Activated naive CD4-positive, alpha-beta T cell treated with anti-CD3 and anti-CD28 coated beads for 36 hours (primary cell): ENCODE measurements at regions of chr11 and their contacts with region 1.

Region 1: GRCh38 chr11:65859200-65859811 is 927 bp upstream of the MUS81 start:
- DNase-seq: peak; percentile 99
- H3K4me3 Mint-ChIP-seq: peak overlapping the region; percentile 97
- H3K27ac Mint-ChIP-seq: peak overlapping the region; percentile 100
- H3K4me1 Mint-ChIP-seq: peaks cover 41% of the 10 kb centered on the region
- H3K27me3 Mint-ChIP-seq: no peaks in the 10 kb centered on the region

Region 2: DNA sequence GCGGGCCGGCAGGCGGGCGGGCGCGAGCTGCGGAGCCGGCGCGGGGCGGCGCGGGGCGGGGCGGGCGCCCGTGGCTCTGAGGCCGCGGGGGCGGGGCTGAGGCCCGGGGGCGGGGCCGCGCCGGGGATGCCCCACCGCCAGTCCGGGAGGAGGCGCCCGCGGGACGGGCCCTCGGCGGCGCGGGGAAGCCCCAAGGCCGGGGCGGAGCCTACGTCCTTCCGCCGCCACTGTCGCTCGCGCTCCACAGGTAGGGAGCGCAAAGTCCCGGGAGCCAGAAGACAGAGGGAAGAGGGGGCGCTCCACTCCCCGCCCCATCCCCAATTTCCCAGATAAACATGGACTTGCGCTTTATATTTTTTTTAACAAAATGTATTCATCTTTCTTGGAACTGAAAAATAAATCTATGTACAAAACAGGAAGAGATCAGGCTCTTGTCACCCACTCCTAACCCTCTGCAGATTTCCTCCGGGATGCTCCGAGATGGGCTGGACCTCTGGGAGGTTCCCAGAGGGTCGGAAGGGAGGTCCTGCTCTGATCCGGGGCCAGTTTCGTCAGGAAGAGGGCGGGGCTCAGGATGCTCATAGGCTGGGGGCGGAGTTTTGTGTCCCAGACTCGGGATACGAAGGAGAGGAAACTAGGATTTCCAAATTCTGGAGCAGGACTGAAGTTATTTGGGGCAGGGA is 1056.0 kb before region 1 on chr11 and contains the start of gene MAP4K2:
- CTCF ChIA-PET with region 1: no interaction called
- intact Hi-C with region 1: loop called (anchors 5 kb)
- DNase-seq: peak; percentile 88
- H3K4me3 Mint-ChIP-seq: peak within 1 kb of the TSS; percentile 81
- H3K27ac Mint-ChIP-seq: peak within 1 kb of the TSS; percentile 89
- H3K4me1 Mint-ChIP-seq: peaks cover 31% of the 10 kb centered on the region
- H3K27me3 Mint-ChIP-seq: no peaks in the 10 kb centered on the region
- total RNA-seq, gene MAP4K2: 69.5 to 73.9 TPM

Region 3: GRCh38 chr11:65516135-65516935 is 343.0 kb before region 1 on chr11:
- CTCF ChIA-PET with region 1: no interaction called
- intact Hi-C with region 1: no loop called
- DNase-seq: no peak
- H3K4me3 Mint-ChIP-seq: no peak overlapping the region
- H3K27ac Mint-ChIP-seq: peak overlapping the region; percentile 38
- H3K4me1 Mint-ChIP-seq: peaks cover 3% of the 10 kb centered on the region
- H3K27me3 Mint-ChIP-seq: no peaks in the 10 kb centered on the region

Region 4: GRCh38 chr11:65615229-65615941 is 243.9 kb before region 1 on chr11 and contains the start of gene PCNX3:
- CTCF ChIA-PET with region 1: no interaction called
- intact Hi-C with region 1: loop called (anchors 1 kb)
- DNase-seq: peak; percentile 100
- H3K4me3 Mint-ChIP-seq: peak within 1 kb of the TSS; percentile 95
- H3K27ac Mint-ChIP-seq: peak within 1 kb of the TSS; percentile 98
- H3K4me1 Mint-ChIP-seq: peaks cover 54% of the 10 kb centered on the region
- H3K27me3 Mint-ChIP-seq: no peaks in the 10 kb centered on the region
- total RNA-seq, gene PCNX3: 21.6 to 24.7 TPM

Region 5: DNA sequence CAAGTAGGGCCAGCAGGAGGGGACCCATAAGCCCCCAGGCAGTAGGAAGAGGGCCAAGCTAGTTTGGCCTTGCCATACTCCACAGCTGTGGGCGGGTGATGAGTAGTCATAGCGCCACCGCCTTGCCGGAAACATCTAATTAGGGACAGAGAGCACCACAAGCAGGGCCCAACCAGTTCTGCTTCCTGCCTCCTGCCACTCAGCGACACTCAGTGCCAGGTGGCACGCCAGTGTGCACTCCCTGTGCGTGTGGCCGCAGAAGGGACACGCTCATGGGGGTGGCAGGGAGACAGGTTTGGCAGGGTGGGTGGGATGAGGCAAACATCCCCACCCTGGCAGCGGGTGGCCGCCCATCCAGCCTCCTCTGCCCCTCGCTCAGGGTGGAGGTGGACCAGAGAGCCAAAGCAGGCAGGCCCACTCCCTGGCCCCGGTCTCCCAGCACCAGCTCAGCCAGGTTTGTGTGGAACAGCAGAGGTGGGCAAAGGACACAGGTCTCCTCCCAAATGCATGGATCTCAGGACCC is 67.6 kb before region 1 on chr11:
- CTCF ChIA-PET with region 1: no interaction called
- intact Hi-C with region 1: no loop called
- DNase-seq: peak; percentile 80
- H3K4me3 Mint-ChIP-seq: no peak overlapping the region
- H3K27ac Mint-ChIP-seq: no peak overlapping the region
- H3K4me1 Mint-ChIP-seq: peaks cover 9% of the 10 kb centered on the region
- H3K27me3 Mint-ChIP-seq: peaks cover 29% of the 10 kb centered on the region

Region 6: DNA sequence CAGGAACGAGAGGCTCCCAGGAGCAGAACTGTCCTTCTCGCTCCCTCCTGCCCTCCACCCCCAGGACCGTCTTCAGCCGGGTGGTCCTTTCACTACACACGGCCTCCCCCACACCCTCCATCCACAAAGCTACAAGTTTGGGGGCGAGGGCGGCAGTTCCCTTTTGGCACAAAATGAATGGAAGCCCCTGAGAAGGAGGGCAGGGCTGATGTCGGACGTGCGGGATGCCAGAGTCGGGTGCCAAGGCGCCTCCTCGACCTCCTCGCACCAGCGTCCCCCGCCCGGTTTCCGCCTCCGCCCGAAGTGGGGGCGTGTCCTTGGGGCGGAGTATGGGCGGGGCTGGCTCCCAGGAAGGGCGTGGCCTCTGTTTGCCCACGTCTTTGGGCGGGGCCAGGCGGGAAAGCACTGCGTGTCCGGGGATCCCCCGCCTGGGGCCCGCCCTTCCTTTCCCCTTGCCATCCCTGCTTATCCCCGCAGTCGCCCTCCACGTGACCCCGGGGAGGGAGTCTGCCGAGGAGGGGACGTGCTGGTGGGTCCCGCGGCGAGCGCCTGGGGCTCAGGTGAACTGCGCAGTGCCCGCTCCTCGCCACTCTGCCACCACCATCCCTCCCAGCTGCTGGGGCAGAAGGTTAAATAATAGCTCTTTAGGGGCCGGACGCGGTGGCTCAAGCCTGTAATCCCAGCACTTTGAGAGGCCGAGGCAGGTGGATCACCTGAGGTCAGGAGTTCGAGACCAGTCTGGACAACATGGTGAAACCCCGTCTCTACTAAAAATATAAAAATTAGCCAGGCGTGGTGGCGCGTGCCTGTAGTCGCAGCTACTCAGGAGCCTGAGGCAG is 14.2 kb after region 1 on chr11:
- CTCF ChIA-PET with region 1: interaction called, 22 read pairs
- intact Hi-C with region 1: loop called (anchors 2 kb)
- DNase-seq: peak; percentile 98
- H3K4me3 Mint-ChIP-seq: peak overlapping the region; percentile 87
- H3K27ac Mint-ChIP-seq: peak overlapping the region; percentile 82
- H3K4me1 Mint-ChIP-seq: peaks cover 17% of the 10 kb centered on the region
- H3K27me3 Mint-ChIP-seq: no peaks in the 10 kb centered on the region

Region 7: DNA sequence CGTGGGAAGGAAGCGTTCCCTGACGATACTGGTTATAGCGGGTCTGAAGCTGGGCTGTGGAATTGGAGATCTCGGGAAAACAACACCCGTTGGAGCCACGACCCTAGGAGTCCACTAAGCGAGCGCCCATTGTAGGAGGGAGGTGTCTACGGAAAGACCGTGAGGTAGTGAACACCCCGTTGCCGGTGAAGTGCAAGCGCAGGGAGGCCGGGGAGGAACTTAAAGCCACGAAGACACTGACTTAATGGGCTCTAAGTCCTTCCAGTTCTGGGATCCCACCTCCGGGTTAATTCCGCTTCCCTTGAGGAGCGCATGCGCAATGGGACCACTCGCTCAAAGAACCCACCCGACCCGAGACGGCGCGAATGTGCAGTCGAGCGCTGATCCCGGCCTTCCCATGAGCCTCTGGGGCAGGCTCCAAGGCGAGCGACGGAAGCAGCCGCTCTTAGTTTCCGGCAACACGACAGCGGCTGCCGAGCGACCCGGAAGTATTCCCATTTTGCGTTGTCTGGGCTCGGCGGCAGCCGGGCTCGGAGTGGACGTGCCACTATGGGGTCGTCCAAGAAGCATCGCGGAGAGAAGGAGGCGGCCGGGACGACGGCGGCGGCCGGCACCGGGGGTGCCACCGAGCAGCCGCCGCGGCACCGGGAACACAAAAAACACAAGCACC is 102.1 kb after region 1 on chr11 and contains the start of gene SART1:
- CTCF ChIA-PET with region 1: no interaction called
- intact Hi-C with region 1: loop called (anchors 1 kb)
- DNase-seq: peak; percentile 98
- H3K4me3 Mint-ChIP-seq: peak within 1 kb of the TSS; percentile 95
- H3K27ac Mint-ChIP-seq: peak within 1 kb of the TSS; percentile 95
- H3K4me1 Mint-ChIP-seq: peaks cover 48% of the 10 kb centered on the region
- H3K27me3 Mint-ChIP-seq: no peaks in the 10 kb centered on the region
- total RNA-seq, gene SART1: 50.1 to 59.9 TPM

Region 8: GRCh38 chr11:66051766-66052663 is 192.7 kb after region 1 on chr11 and contains the start of gene SF3B2:
- CTCF ChIA-PET with region 1: no interaction called
- intact Hi-C with region 1: loop called (anchors 1 kb)
- DNase-seq: peak; percentile 98
- H3K4me3 Mint-ChIP-seq: peak within 1 kb of the TSS; percentile 99
- H3K27ac Mint-ChIP-seq: peak within 1 kb of the TSS; percentile 96
- H3K4me1 Mint-ChIP-seq: peaks cover 41% of the 10 kb centered on the region
- H3K27me3 Mint-ChIP-seq: peaks cover 7% of the 10 kb centered on the region
- total RNA-seq, gene SF3B2: 319 to 321 TPM